ENCODE measurements at regions of chr14 and their contacts with region 1.

Region 1: GRCh38 chr14:34678306-34678705 is 36.1 kb downstream of the CFL2 start:
- DNase-seq: no peak
- H3K4me3 ChIP-seq: no peak overlapping the region
- H3K27ac ChIP-seq: peak overlapping the region; percentile 83
- H3K4me1 ChIP-seq: peaks cover 12% of the 10 kb centered on the region
- H3K27me3 ChIP-seq: no peaks in the 10 kb centered on the region
- CTCF ChIP-seq: no peak
- POLR2A ChIP-seq: no peak

Region 2: DNA sequence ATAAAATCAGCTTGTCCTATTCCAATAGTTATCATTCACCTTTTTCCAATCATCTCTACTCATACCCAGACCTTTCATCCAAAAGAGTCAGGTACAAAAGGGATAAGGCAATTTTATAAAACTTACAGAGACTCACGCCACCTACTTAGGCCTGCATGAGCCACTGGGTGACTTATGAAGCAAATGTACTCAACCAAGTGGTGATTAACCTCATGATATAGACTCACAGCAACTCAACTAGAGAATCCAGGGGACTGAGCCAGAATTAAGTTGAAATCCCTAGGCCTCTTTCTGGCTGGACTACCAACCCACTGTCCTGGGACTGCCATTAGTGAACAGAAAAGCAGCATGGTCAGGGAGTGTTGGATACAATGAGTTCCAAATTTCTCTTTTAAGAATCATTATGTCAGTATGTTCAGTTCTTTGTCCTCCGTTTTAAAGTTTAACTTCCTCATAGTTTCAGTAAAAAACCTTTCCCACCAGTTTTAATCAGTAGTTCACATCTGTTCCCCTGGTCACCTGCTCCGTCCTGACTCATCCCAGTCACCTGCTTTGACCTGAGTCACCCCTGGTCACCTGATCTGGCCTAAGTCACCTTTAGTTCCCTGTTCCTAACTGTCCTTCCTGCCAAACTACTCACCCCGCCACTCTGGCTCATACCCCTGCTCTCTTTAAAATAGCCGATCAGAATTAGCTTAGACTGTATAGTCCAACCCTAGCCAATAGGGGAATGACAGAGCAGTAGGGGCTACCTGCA is 253.0 kb before region 1 on chr14:
- CTCF ChIA-PET with region 1: no interaction called
- POLR2A ChIA-PET with region 1: no interaction called
- dilution Hi-C with region 1: no loop called
- intact Hi-C with region 1: no loop called
- DNase-seq: no peak
- H3K4me3 ChIP-seq: no peak overlapping the region
- H3K27ac ChIP-seq: no peak overlapping the region
- H3K4me1 ChIP-seq: no peaks in the 10 kb centered on the region
- H3K27me3 ChIP-seq: peaks cover 4% of the 10 kb centered on the region in 2 experiments
- CTCF ChIP-seq: no peak
- POLR2A ChIP-seq: no peak

Region 3: GRCh38 chr14:34693228-34693939 is 15.1 kb after region 1 on chr14:
- CTCF ChIA-PET with region 1: interaction called, 4 read pairs
- POLR2A ChIA-PET with region 1: no interaction called
- dilution Hi-C with region 1: no loop called
- intact Hi-C with region 1: loop called (anchors 2 kb)
- DNase-seq: no peak
- H3K4me3 ChIP-seq: no peak overlapping the region
- H3K27ac ChIP-seq: no peak overlapping the region
- H3K4me1 ChIP-seq: no peaks in the 10 kb centered on the region
- H3K27me3 ChIP-seq: no peaks in the 10 kb centered on the region
- CTCF ChIP-seq: no peak
- POLR2A ChIP-seq: no peak

Region 4: GRCh38 chr14:34714320-34715126 is 36.2 kb after region 1 on chr14 and contains the start of gene CFL2:
- CTCF ChIA-PET with region 1: interaction called, 6 read pairs
- POLR2A ChIA-PET with region 1: no interaction called
- dilution Hi-C with region 1: no loop called
- intact Hi-C with region 1: loop called (anchors 1 kb)
- DNase-seq: peak; percentile 81
- H3K4me3 ChIP-seq: peak within 1 kb of the TSS; percentile 60 to 95 (median 82)
- H3K27ac ChIP-seq: peak within 1 kb of the TSS; percentile 84
- H3K4me1 ChIP-seq: peaks cover 23% of the 10 kb centered on the region
- H3K27me3 ChIP-seq: no peaks in the 10 kb centered on the region
- CTCF ChIP-seq: no peak
- POLR2A ChIP-seq: peak; percentile 69
- total RNA-seq, gene CFL2: 91.9 and 98.1 TPM in 2 replicates

Region 5: GRCh38 chr14:34781242-34781641 is 102.9 kb after region 1 on chr14:
- CTCF ChIA-PET with region 1: no interaction called
- POLR2A ChIA-PET with region 1: no interaction called
- dilution Hi-C with region 1: no loop called
- intact Hi-C with region 1: loop called (anchors 10 kb)
- DNase-seq: peak; percentile 95
- H3K4me3 ChIP-seq: peak overlapping the region in 1 of 3 experiments; percentile 40
- H3K27ac ChIP-seq: peak overlapping the region; percentile 95
- H3K4me1 ChIP-seq: peaks cover 22% of the 10 kb centered on the region
- H3K27me3 ChIP-seq: no peaks in the 10 kb centered on the region
- CTCF ChIP-seq: no peak
- POLR2A ChIP-seq: peak; percentile 34

Measured in endothelial cell of umbilical vein (primary cell).